CD8-positive, alpha-beta memory T cell (primary cell): ENCODE measurements at regions of chr7 and their contacts with region 1.

Region 1: DNA sequence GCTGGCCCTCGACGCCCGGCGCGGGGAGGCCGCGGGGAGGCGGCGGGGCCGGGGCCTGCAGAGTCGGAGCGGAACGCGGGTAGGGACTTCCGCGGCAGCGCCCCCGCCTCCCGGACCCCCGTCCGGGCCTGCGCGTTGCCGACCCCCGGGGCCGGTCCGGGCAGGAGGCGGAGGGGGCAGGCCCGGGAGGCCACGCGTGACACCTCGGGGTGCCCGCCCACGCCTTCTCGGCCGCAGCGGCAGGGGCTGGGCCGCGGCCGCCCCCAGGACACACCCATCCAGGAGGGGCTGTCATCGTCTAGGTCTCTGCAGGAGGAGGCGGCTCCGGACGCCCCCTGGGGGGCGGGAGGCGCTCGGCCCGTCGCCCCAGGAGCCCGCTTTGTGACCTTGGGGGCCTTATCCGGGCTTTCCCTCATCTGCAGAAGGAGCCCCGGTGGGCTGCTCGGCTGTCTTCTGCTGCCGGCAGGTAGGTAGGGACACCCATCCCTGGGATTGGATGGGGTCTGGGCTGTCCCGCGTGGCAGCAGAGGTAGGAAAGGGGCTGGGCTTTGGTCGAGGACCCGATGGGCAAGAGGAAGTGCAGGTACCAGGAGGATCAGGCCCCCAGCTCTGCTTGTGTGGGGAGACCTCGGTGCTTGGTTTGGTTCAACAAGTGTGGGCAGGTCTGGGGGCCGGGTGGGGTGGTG is 569 bp downstream of the ZNF316 start:
- DNase-seq: peak; percentile 52 to 79 (median 63)
- H3K4me3 ChIP-seq: peak overlapping the region; percentile 50
- H3K4me3 Mint-ChIP-seq: peak overlapping the region; percentile 85 to 90 (median 88)
- H3K27ac ChIP-seq: peak overlapping the region; percentile 61
- H3K27ac Mint-ChIP-seq: peak overlapping the region; percentile 86 to 97 (median 94)
- H3K4me1 ChIP-seq: peaks cover 22% of the 10 kb centered on the region
- H3K4me1 Mint-ChIP-seq: peaks cover 25 to 44% (median 31%) of the 10 kb centered on the region in 3 donors
- H3K27me3 ChIP-seq: no peaks in the 10 kb centered on the region
- H3K27me3 Mint-ChIP-seq: no peaks in the 10 kb centered on the region

Region 2: DNA sequence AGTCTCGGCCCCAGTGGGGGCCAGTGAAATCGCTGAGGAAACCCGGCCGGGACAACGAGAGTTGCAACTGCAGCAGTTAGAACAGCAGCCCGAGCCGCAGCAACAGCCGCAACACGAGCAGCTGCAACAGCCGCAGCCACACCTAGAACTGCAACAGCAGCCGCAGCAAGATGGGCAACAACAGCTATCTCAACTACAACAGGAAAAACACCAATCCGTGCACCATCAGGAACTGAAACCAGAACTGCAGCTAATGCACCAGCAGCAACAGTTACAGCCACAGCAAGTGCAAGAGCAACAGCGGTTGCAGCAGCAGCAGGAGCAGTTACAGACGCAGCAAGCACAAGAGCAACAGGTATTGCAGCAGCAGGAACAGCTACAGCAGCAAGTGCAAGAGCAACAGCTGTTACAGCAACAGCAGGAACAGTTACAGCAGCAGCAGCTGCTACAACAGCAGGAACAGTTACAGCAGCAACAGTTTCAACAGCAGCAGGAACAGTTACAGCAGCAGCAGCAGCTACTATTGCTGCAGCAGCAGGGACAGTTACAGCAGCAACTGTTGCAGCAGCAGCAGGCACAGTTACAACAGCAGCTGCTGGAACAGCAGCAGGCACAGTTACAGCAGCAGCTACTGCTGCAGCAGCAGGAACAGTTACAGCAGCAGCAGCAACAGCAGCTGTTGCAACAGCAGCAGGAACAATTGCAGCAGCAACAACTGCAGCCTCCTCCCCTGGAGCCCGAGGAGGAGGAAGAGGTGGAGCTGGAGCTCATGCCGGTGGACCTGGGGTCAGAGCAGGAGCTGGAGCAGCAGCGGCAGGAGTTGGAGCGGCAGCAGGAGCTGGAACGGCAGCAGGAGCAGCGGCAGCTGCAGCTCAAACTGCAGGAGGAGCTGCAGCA is 16.2 kb before region 1 on chr7:
- CTCF ChIA-PET with region 1: interaction called, 11 read pairs
- POLR2A ChIA-PET with region 1: interaction called, 3 read pairs
- DNase-seq: no peak
- H3K4me3 ChIP-seq: peak overlapping the region; percentile 46
- H3K4me3 Mint-ChIP-seq: peak overlapping the region; percentile 73 to 86 (median 79)
- H3K27ac ChIP-seq: no peak overlapping the region
- H3K27ac Mint-ChIP-seq: peak overlapping the region; percentile 54 to 93 (median 82)
- H3K4me1 ChIP-seq: peaks cover 52% of the 10 kb centered on the region
- H3K4me1 Mint-ChIP-seq: peaks cover 47 to 75% (median 49%) of the 10 kb centered on the region in 3 donors
- H3K27me3 ChIP-seq: no peaks in the 10 kb centered on the region
- H3K27me3 Mint-ChIP-seq: peaks cover 0 to 3% of the 10 kb centered on the region in 2 donors

Region 3: DNA sequence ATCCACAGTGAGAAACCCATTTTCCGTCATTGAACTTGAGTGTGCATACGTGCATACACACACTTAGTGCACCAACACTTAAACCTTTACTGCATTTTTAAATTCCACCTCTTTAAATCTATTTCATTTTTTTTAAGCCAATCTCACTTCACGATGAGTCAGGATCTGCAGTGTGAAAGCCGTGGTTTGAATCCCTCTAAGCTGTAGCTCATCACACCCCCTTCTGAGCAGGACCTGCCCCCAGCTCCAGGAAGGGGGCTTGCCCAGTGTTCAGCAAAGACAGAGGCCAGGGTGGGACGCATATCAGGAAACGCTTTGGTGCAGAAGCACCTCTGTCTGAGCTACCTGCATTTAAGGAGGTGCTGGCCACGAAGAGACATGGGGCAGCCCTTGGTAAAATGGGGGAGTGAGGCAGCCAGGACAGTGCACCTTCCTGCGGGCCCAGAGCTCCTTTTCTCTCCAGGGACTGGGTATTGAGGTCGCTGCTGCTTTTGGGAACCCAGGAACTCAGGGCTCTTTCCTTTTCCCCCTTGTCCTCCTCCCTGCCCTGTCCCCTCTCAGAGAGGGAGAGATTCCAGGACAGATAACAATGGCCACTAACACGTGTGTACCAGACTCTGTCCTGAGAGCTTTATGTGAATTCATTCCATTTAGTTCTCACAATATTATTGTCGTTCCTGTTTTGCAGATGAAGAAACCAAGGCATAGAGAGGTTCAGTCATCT is 21.1 kb after region 1 on chr7:
- CTCF ChIA-PET with region 1: no interaction called
- POLR2A ChIA-PET with region 1: interaction called, 15 read pairs
- DNase-seq: no peak
- H3K4me3 ChIP-seq: no peak overlapping the region
- H3K4me3 Mint-ChIP-seq: no peak overlapping the region
- H3K27ac ChIP-seq: no peak overlapping the region
- H3K27ac Mint-ChIP-seq: peak overlapping the region in 2 of 8 donors; percentile 29 to 58
- H3K4me1 ChIP-seq: no peaks in the 10 kb centered on the region
- H3K4me1 Mint-ChIP-seq: peaks cover 0 to 18% (median 6%) of the 10 kb centered on the region in 3 donors
- H3K27me3 ChIP-seq: no peaks in the 10 kb centered on the region
- H3K27me3 Mint-ChIP-seq: peaks cover 0 to 4% of the 10 kb centered on the region in 2 donors